T-cell (primary cell): ENCODE measurements at regions of chr6 and their contacts with region 1.

Region 1: GRCh38 chr6:151891524-151891923 is 84.0 kb downstream of the ESR1 start:
- DNase-seq: no peak
- ATAC-seq: no peak
- H3K4me3 ChIP-seq: no peak overlapping the region
- H3K4me3 Mint-ChIP-seq: no peak overlapping the region
- H3K27ac ChIP-seq: no peak overlapping the region
- H3K27ac Mint-ChIP-seq: no peak overlapping the region
- H3K4me1 ChIP-seq: no peaks in the 10 kb centered on the region
- H3K4me1 Mint-ChIP-seq: no peaks in the 10 kb centered on the region
- H3K27me3 ChIP-seq: no peaks in the 10 kb centered on the region
- H3K27me3 Mint-ChIP-seq: no peaks in the 10 kb centered on the region

Region 2: DNA sequence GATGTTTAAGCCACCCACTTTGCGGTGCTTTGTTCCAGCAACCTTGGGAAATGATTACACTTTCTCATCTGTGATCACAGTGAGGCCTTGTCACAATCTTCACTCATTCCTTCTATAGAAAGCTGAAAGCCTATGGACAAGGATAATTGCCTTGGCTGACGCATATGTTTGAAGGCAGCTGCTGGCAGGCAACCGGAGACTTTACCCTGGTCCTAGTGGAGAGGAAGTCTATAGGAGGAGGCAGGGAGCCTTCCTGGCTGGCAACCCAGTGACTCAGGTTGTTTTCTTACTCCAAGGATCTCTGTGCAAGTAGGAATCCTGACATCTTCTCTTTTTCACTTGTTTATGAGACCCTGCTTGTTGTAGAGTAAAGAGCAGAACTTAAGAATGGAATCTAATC is 118.1 kb before region 1 on chr6:
- CTCF ChIA-PET with region 1: no interaction called
- POLR2A ChIA-PET with region 1: no interaction called
- DNase-seq: no peak
- ATAC-seq: no peak
- H3K4me3 ChIP-seq: no peak overlapping the region
- H3K4me3 Mint-ChIP-seq: no peak overlapping the region
- H3K27ac ChIP-seq: no peak overlapping the region
- H3K27ac Mint-ChIP-seq: no peak overlapping the region
- H3K4me1 ChIP-seq: no peaks in the 10 kb centered on the region
- H3K4me1 Mint-ChIP-seq: no peaks in the 10 kb centered on the region
- H3K27me3 ChIP-seq: no peaks in the 10 kb centered on the region
- H3K27me3 Mint-ChIP-seq: peaks cover 4% of the 10 kb centered on the region in 2 donors

Region 3: GRCh38 chr6:151847066-151847465 is 44.5 kb before region 1 on chr6:
- CTCF ChIA-PET with region 1: no interaction called
- POLR2A ChIA-PET with region 1: no interaction called
- DNase-seq: peak in 1 of 35 experiments; percentile 1
- ATAC-seq: no peak
- H3K4me3 ChIP-seq: no peak overlapping the region
- H3K4me3 Mint-ChIP-seq: no peak overlapping the region
- H3K27ac ChIP-seq: no peak overlapping the region
- H3K27ac Mint-ChIP-seq: no peak overlapping the region
- H3K4me1 ChIP-seq: no peaks in the 10 kb centered on the region
- H3K4me1 Mint-ChIP-seq: no peaks in the 10 kb centered on the region
- H3K27me3 ChIP-seq: no peaks in the 10 kb centered on the region
- H3K27me3 Mint-ChIP-seq: no peaks in the 10 kb centered on the region

Region 4: DNA sequence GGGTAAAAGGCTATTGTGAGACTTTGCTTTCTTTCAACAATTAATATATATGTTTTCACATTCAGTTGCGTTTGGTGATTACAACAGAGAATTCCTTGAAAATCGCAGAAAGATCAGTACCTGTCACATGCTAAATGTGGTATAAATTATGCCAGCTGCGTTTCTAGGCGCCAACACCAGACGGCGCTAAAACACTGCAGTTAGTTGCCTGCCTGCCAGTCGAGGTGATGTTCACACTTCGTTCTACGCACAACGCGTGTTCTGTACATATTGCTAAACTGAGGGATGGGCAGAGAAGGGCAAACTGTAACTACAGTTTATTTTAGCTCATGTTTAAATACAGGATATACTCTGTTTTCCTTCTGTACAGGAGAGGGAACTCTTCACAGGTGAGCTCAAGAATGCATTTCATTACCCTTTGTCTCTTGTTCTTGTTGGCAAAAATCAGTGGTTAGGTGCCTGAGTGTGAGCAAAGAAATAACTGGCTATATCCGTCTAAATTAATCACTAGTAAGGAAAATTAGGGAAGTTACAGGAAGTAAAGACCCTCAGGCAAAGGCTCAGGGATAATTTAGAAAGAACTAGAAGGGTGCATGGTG is 1339.6 kb after region 1 on chr6:
- CTCF ChIA-PET with region 1: no interaction called
- POLR2A ChIA-PET with region 1: interaction called in 1 of 2 experiments, 12 read pairs
- DNase-seq: peak in 7 of 35 experiments; percentile 0 to 9 (median 1)
- ATAC-seq: no peak
- H3K4me3 ChIP-seq: no peak overlapping the region
- H3K4me3 Mint-ChIP-seq: no peak overlapping the region
- H3K27ac ChIP-seq: no peak overlapping the region
- H3K27ac Mint-ChIP-seq: no peak overlapping the region
- H3K4me1 ChIP-seq: no peaks in the 10 kb centered on the region
- H3K4me1 Mint-ChIP-seq: no peaks in the 10 kb centered on the region
- H3K27me3 ChIP-seq: no peaks in the 10 kb centered on the region
- H3K27me3 Mint-ChIP-seq: peaks cover 0 to 10% of the 10 kb centered on the region in 2 donors